PC-9 (cell line): ENCODE measurements at regions of chr6 and their contacts with region 1.

Region 1: GRCh38 chr6:42294759-42295158 is 77.1 kb upstream of the MRPS10 start:
- DNase-seq: peak; percentile 67 to 97
- H3K4me3 ChIP-seq: no peak overlapping the region
- H3K27ac ChIP-seq: peak overlapping the region; percentile 91
- H3K4me1 ChIP-seq: peaks cover 69% of the 10 kb centered on the region
- H3K27me3 ChIP-seq: no peaks in the 10 kb centered on the region
- CTCF ChIP-seq: no peak

Region 2: DNA sequence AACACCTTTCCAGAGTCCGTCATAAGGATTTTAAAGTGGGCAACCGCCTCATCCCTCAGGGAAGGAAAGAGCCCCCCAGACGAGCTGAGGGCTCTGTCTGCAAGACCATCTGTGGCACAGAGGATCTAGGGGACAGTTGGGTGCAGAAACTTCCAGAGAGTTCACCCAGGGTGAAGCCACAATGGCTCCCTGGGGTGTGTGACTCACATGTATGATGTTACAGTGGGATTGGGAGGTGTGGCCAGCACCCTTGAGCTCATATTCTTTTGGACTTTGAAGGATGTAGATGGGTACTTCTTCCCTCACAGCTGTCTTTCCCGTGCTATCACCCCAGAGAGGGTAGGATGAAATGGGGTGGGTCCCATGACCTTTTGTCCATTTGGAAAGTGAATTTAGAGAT is 863.9 kb before region 1 on chr6:
- CTCF ChIA-PET with region 1: no interaction called
- POLR2A ChIA-PET with region 1: interaction called, 10 read pairs
- intact Hi-C with region 1: no loop called
- DNase-seq: peak; percentile 35 to 56
- H3K4me3 ChIP-seq: no peak overlapping the region
- H3K27ac ChIP-seq: no peak overlapping the region
- H3K4me1 ChIP-seq: peaks cover 14% of the 10 kb centered on the region
- H3K27me3 ChIP-seq: 0 out of 2 replicates have a peak, but pooled peaks cover 11% of the 10 kb centered on the region
- CTCF ChIP-seq: no peak

Region 3: GRCh38 chr6:42131531-42131930 is 163.2 kb before region 1 on chr6:
- CTCF ChIA-PET with region 1: no interaction called
- POLR2A ChIA-PET with region 1: no interaction called
- intact Hi-C with region 1: no loop called
- DNase-seq: peak; percentile 38 to 53
- H3K4me3 ChIP-seq: no peak overlapping the region
- H3K27ac ChIP-seq: peak overlapping the region; percentile 74
- H3K4me1 ChIP-seq: peaks cover 34% of the 10 kb centered on the region
- H3K27me3 ChIP-seq: no peaks in the 10 kb centered on the region
- CTCF ChIP-seq: no peak

Region 4: GRCh38 chr6:42166444-42167141 is 128.2 kb before region 1 on chr6:
- CTCF ChIA-PET with region 1: no interaction called
- POLR2A ChIA-PET with region 1: no interaction called
- intact Hi-C with region 1: no loop called
- DNase-seq: peak; percentile 67 to 83
- H3K4me3 ChIP-seq: no peak overlapping the region
- H3K27ac ChIP-seq: no peak overlapping the region
- H3K4me1 ChIP-seq: 0 out of 2 replicates have a peak, but pooled peaks cover 7% of the 10 kb centered on the region
- H3K27me3 ChIP-seq: no peaks in the 10 kb centered on the region
- CTCF ChIP-seq: peak; percentile 100

Region 5: GRCh38 chr6:42239351-42240055 is 55.3 kb before region 1 on chr6:
- CTCF ChIA-PET with region 1: no interaction called
- POLR2A ChIA-PET with region 1: interaction called, 13 read pairs
- intact Hi-C with region 1: no loop called
- DNase-seq: peak; percentile 52 to 87
- H3K4me3 ChIP-seq: no peak overlapping the region
- H3K27ac ChIP-seq: peak overlapping the region; percentile 77
- H3K4me1 ChIP-seq: peaks cover 24% of the 10 kb centered on the region
- H3K27me3 ChIP-seq: no peaks in the 10 kb centered on the region
- CTCF ChIP-seq: no peak

Region 6: DNA sequence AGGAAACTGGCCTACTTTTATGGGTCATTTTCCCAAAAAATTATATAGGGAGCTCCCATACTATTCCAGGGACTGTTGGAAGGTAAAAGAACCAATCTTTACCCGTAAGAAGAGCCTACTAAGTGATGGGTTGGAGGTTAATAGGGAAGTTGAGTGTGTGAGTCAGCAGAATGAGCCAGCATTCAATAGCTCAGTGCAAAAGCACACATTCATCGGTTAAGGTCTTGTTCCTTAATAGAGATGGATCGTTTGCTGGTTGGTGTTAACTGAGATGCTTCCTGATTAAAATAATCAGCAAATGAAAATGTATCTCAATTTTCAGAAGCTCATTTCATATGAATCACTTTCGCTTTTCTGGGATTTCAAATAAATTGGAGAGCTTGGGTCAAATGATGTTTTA is 38.2 kb after region 1 on chr6:
- CTCF ChIA-PET with region 1: no interaction called
- POLR2A ChIA-PET with region 1: no interaction called
- intact Hi-C with region 1: no loop called
- DNase-seq: no peak
- H3K4me3 ChIP-seq: no peak overlapping the region
- H3K27ac ChIP-seq: no peak overlapping the region
- H3K4me1 ChIP-seq: peaks cover 7% of the 10 kb centered on the region
- H3K27me3 ChIP-seq: no peaks in the 10 kb centered on the region
- CTCF ChIP-seq: no peak

Region 7: DNA sequence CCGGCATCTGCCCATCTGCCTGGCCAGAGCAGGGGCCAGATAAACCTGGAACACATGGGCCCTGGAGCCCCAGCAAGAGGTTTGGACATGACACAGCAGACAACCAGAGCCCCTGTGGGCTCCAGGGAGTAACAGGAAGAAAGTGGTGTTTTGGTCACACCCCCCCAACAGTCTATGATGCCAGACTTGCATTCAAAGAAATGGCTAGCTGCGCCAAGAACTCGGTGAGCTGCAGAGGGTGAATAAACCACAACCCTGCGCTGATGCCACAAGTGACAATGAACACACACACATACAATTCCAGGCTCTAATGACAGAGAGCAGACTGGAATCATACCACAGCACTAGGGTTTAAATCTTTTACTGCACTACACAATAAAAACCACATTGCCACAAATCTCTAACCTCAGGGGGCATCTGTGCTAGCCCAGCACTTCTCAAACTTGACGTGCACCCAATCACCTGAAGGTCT is 122.9 kb after region 1 on chr6:
- CTCF ChIA-PET with region 1: no interaction called
- POLR2A ChIA-PET with region 1: no interaction called
- intact Hi-C with region 1: no loop called
- DNase-seq: no peak
- H3K4me3 ChIP-seq: no peak overlapping the region
- H3K27ac ChIP-seq: no peak overlapping the region
- H3K4me1 ChIP-seq: no peaks in the 10 kb centered on the region
- H3K27me3 ChIP-seq: no peaks in the 10 kb centered on the region
- CTCF ChIP-seq: no peak